ENCODE measurements at regions of chr2 and their contacts with region 1.

Region 1: GRCh38 chr2:85813982-85814801 is 60.4 kb downstream of the ATOH8 start:
- DNase-seq: peak; percentile 88 to 95 (median 89)
- ATAC-seq: peak; percentile 93 to 96 (median 96)
- H3K4me3 ChIP-seq: no peak overlapping the region
- H3K27ac ChIP-seq: no peak overlapping the region
- H3K4me1 ChIP-seq: peaks cover 0 to 22% (median 12%) of the 10 kb centered on the region in 12 donors
- H3K27me3 ChIP-seq: no peaks in the 10 kb centered on the region
- CTCF ChIP-seq: peak; percentile 91 to 99 (median 94)
- POLR2A ChIP-seq: no peak

Region 2: DNA sequence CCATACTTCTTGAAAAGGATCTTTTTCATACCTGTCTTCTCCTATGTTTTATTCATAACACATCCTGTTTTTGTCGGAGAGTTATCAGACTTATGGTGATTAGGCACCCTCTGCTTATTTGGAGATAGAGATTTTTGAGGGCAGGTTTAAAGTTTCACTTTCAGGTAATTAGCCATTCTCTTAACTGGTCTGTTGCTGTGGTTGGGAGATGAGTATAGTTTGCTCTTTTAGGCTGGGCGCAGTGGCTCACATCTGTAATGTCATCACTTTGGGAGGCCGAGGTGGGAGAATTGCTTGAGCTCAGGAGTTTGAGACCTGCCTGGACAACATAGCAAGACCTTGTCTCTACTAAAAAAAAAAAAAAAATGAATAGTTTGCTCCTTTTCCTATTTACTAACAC is 171.5 kb before region 1 on chr2:
- intact Hi-C with region 1: loop called (anchors 1 to 10 kb)
- DNase-seq: no peak
- ATAC-seq: no peak
- H3K4me3 ChIP-seq: no peak overlapping the region
- H3K27ac ChIP-seq: no peak overlapping the region
- H3K4me1 ChIP-seq: peaks cover 0 to 2% (median 0%) of the 10 kb centered on the region in 12 donors
- H3K27me3 ChIP-seq: no peaks in the 10 kb centered on the region
- CTCF ChIP-seq: no peak
- POLR2A ChIP-seq: no peak

Region 3: GRCh38 chr2:85662899-85663593 is 151.1 kb before region 1 on chr2:
- intact Hi-C with region 1: loop called in 1 of 10 experiments (anchors 10 kb)
- DNase-seq: peak in 3 of 5 donors; percentile 39 to 71 (median 52)
- ATAC-seq: peak; percentile 60 to 87 (median 84)
- H3K4me3 ChIP-seq: no peak overlapping the region
- H3K27ac ChIP-seq: peak overlapping the region; percentile 10 to 81 (median 62)
- H3K4me1 ChIP-seq: peaks cover 0 to 34% (median 25%) of the 10 kb centered on the region in 12 donors
- H3K27me3 ChIP-seq: no peaks in the 10 kb centered on the region
- CTCF ChIP-seq: no peak
- POLR2A ChIP-seq: no peak

Region 4: DNA sequence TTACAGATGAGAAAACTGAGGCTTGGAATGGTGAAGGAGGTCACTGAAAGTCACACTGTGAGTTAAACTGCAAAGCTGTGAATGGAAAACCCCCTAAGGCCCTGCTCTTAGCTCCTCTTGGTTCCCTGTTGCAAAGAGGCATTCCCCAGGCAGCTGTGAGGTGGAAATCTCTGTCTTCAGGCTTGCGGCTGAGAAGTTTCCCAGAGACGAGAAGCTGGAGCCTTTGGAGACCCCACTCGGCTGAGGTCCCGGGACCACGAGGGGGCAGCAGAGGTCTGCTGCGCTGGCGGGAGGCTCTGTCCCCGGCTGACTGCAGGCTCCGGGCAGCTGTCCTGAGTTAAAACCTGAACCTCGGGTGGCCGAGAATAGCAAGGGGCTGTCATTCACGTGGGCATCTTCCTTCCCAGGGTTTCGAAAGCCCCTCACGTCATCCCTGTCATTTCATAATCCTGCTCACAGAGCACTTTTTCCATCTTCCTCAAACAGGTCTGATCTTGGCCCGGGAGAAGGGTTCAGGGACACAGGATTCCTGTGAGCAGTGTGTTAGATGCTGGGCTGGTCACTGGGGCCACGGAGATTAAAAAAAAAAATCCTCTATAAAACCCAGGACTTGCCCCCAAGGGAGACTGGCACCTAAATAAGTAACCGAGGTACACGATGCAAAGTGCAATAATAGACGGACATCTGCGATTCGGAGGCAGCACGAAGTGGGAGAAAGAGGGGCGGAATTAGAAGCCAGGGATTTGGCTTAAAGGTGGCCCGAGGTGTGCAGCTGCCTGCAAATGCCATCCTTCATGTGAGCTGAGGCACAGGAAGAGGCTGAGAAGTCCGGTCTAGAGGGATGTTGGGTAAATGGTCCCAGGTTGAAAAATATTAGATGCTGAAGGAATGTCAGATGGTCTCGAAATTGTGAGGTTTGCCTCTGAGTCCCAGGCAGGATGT is 85.0 kb before region 1 on chr2:
- intact Hi-C with region 1: loop called (anchors 1 to 2 kb)
- DNase-seq: peak; percentile 89 to 95 (median 90)
- ATAC-seq: peak; percentile 89 to 95 (median 94)
- H3K4me3 ChIP-seq: no peak overlapping the region
- H3K27ac ChIP-seq: peak overlapping the region in 9 of 12 donors; percentile 15 to 71 (median 52)
- H3K4me1 ChIP-seq: peaks cover 0 to 47% (median 32%) of the 10 kb centered on the region in 12 donors
- H3K27me3 ChIP-seq: no peaks in the 10 kb centered on the region
- CTCF ChIP-seq: peak; percentile 90 to 99 (median 98)
- POLR2A ChIP-seq: no peak

Region 5: GRCh38 chr2:85852937-85853498 is 38.8 kb after region 1 on chr2:
- intact Hi-C with region 1: no loop called
- DNase-seq: peak in 2 of 5 donors; percentile 31 to 33
- ATAC-seq: peak in 3 of 4 donors; percentile 58 to 77 (median 71)
- H3K4me3 ChIP-seq: peak overlapping the region in 1 of 12 donors; percentile 41
- H3K27ac ChIP-seq: peak overlapping the region in 11 of 12 donors; percentile 3 to 96 (median 39)
- H3K4me1 ChIP-seq: peaks cover 0 to 51% (median 2%) of the 10 kb centered on the region in 12 donors
- H3K27me3 ChIP-seq: no peaks in the 10 kb centered on the region
- CTCF ChIP-seq: no peak
- POLR2A ChIP-seq: no peak

Region 6: GRCh38 chr2:86140969-86141392 is 326.8 kb after region 1 on chr2:
- intact Hi-C with region 1: no loop called
- DNase-seq: no peak
- ATAC-seq: peak in 3 of 4 donors; percentile 52 to 68 (median 56)
- H3K4me3 ChIP-seq: no peak overlapping the region
- H3K27ac ChIP-seq: peak overlapping the region in 1 of 12 donors; percentile 22
- H3K4me1 ChIP-seq: peaks cover 0 to 10% (median 0%) of the 10 kb centered on the region in 12 donors
- H3K27me3 ChIP-seq: no peaks in the 10 kb centered on the region
- CTCF ChIP-seq: no peak
- POLR2A ChIP-seq: no peak

Region 7: GRCh38 chr2:86290596-86291327 is 476.6 kb after region 1 on chr2:
- intact Hi-C with region 1: no loop called
- DNase-seq: peak in 4 of 5 donors; percentile 49 to 54 (median 51)
- ATAC-seq: peak; percentile 49 to 75 (median 64)
- H3K4me3 ChIP-seq: no peak overlapping the region
- H3K27ac ChIP-seq: peak overlapping the region; percentile 8 to 65 (median 56)
- H3K4me1 ChIP-seq: peaks cover 0 to 53% (median 13%) of the 10 kb centered on the region in 12 donors
- H3K27me3 ChIP-seq: no peaks in the 10 kb centered on the region
- CTCF ChIP-seq: no peak
- POLR2A ChIP-seq: no peak